ENCODE measurements at regions of chr2 and their contacts with region 1.

Region 1: DNA sequence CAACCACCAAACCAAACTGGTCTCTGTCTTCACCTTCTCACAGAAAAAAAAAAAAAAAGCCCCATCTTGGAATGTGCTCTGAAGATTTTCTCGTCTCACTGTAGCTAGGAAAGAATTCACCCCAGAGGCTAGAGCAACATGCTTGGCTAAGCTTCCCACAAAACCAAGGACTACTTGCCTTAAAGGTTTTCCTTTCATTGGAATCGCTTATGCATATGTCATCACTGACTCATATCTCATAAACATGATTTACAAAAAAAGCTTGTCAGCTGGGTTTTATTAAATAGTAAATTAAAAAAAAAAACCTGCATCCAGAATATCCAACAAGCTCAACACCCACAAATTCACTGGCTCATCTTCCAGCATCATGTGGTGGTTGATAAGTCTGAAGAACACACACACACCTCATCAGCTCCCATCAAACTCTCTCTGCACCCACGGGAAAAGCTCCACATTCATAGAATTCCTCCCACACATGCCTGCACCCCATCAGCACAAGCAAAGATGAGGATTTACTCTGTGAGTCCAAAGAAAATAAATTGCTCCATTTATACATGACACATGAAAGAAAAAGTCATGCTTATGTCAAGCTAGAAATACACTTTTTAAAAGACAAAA is 182.0 kb upstream of the TRIB2 start:
- DNase-seq: no peak
- H3K4me3 Mint-ChIP-seq: no peak overlapping the region
- H3K27ac Mint-ChIP-seq: no peak overlapping the region
- H3K4me1 Mint-ChIP-seq: peaks cover 16% of the 10 kb centered on the region
- H3K27me3 Mint-ChIP-seq: no peaks in the 10 kb centered on the region

Region 2: GRCh38 chr2:10993001-10993481 is 1541.7 kb before region 1 on chr2:
- CTCF ChIA-PET with region 1: no interaction called
- POLR2A ChIA-PET with region 1: no interaction called
- intact Hi-C with region 1: no loop called
- DNase-seq: no peak
- H3K4me3 Mint-ChIP-seq: no peak overlapping the region
- H3K27ac Mint-ChIP-seq: no peak overlapping the region
- H3K4me1 Mint-ChIP-seq: no peaks in the 10 kb centered on the region
- H3K27me3 Mint-ChIP-seq: no peaks in the 10 kb centered on the region

Region 3: GRCh38 chr2:12514631-12515433 is 19.9 kb before region 1 on chr2:
- CTCF ChIA-PET with region 1: no interaction called
- POLR2A ChIA-PET with region 1: no interaction called
- intact Hi-C with region 1: loop called (anchors 2 kb)
- DNase-seq: peak; percentile 54
- H3K4me3 Mint-ChIP-seq: peak overlapping the region; percentile 9
- H3K27ac Mint-ChIP-seq: peak overlapping the region; percentile 26
- H3K4me1 Mint-ChIP-seq: peaks cover 46% of the 10 kb centered on the region
- H3K27me3 Mint-ChIP-seq: no peaks in the 10 kb centered on the region

Region 4: GRCh38 chr2:12606472-12607000 is 71.8 kb after region 1 on chr2:
- CTCF ChIA-PET with region 1: no interaction called
- POLR2A ChIA-PET with region 1: no interaction called
- intact Hi-C with region 1: no loop called
- DNase-seq: no peak
- H3K4me3 Mint-ChIP-seq: no peak overlapping the region
- H3K27ac Mint-ChIP-seq: no peak overlapping the region
- H3K4me1 Mint-ChIP-seq: peaks cover 12% of the 10 kb centered on the region
- H3K27me3 Mint-ChIP-seq: no peaks in the 10 kb centered on the region

Region 5: DNA sequence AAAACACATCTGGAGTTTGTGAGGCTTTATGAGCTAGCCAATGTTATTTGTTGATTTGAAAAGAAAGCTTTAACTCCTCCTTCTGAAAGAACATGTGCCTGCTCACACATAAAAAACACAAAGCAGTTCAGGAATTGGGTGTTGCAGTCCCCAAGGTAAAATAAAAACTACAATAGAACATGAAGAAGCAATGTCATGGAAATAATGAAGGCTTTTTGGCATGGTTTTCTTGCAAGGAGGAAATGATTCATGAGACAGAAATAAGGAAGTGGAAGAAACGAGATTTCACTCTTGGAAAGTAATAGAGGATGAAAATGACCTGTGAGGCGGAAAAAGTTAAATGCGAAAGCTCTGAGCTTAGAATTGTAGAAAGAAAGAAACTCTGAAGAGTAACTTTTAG is 263.1 kb after region 1 on chr2:
- CTCF ChIA-PET with region 1: no interaction called
- POLR2A ChIA-PET with region 1: no interaction called
- intact Hi-C with region 1: no loop called
- DNase-seq: no peak
- H3K4me3 Mint-ChIP-seq: no peak overlapping the region
- H3K27ac Mint-ChIP-seq: no peak overlapping the region
- H3K4me1 Mint-ChIP-seq: peaks cover 4% of the 10 kb centered on the region
- H3K27me3 Mint-ChIP-seq: no peaks in the 10 kb centered on the region